AG04450 (cell line): ENCODE measurements at regions of chr3 and their contacts with region 1.

Region 1: GRCh38 chr3:179432021-179432420 is 19.2 kb downstream of the GNB4 start:
- DNase-seq: no peak
- H3K4me3 ChIP-seq: no peak overlapping the region
- H3K27ac ChIP-seq: no peak overlapping the region
- H3K27me3 ChIP-seq: no peaks in the 10 kb centered on the region
- CTCF ChIP-seq: no peak

Region 2: DNA sequence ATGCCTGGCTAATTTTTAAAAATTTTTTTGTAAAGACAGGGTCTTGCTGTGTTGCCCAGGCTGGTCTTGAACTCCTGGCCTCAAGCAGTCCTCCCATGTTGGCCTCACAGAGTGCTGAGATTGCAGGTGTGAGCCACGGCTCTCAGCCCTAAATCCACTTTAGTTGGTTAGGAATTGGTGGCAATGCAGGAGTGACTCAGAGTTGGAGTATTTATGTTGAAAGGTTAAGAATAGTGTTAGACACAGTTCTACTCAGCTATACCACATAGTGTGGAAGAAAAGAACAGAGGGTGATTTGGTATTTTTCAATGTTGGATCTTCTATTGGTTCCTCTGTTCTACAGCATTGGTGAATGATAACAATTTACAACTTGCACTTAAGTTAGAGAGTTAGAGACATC is 101.6 kb before region 1 on chr3:
- CTCF ChIA-PET with region 1: no interaction called
- POLR2A ChIA-PET with region 1: no interaction called
- DNase-seq: no peak
- H3K4me3 ChIP-seq: no peak overlapping the region
- H3K27ac ChIP-seq: no peak overlapping the region
- H3K27me3 ChIP-seq: no peaks in the 10 kb centered on the region
- CTCF ChIP-seq: no peak

Region 3: DNA sequence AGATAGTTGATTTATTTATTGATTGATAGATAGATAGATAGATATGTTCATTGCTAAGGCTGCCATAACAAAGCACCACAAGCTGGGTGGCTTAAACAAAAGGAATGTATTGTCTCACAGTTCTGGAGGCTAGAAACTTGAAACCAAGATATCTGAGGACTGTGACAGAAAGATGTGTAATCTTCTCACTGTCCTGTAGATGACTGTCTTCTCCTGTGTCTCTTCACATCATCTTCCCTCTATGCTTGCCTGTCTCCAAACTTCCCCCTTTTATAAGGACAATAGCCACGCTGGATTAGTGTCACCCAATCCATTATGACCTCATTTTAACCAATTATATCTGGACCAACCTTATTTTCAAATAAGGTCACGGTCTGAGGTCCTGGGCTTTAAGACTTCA is 21.7 kb before region 1 on chr3:
- CTCF ChIA-PET with region 1: no interaction called
- POLR2A ChIA-PET with region 1: interaction called, 14 read pairs
- DNase-seq: no peak
- H3K4me3 ChIP-seq: no peak overlapping the region
- H3K27ac ChIP-seq: no peak overlapping the region
- H3K27me3 ChIP-seq: no peaks in the 10 kb centered on the region
- CTCF ChIP-seq: 0 out of 2 replicates have a peak, but pooled peaks have one; percentile 6